Activated T-helper 2 cell treated with anti-CD3 and anti-CD28 coated beads, Interferon-gamma antibody, Interleukin-2, Interleukin-4, amounts not matched to agents 10 μg/mL and 5 μg/mL and 100 μg/mL, durations not matched to agents 14 hours and 24 hours and 36 hours (primary cell): ENCODE measurements at regions of chr15 and their contacts with region 1.

Region 1: DNA sequence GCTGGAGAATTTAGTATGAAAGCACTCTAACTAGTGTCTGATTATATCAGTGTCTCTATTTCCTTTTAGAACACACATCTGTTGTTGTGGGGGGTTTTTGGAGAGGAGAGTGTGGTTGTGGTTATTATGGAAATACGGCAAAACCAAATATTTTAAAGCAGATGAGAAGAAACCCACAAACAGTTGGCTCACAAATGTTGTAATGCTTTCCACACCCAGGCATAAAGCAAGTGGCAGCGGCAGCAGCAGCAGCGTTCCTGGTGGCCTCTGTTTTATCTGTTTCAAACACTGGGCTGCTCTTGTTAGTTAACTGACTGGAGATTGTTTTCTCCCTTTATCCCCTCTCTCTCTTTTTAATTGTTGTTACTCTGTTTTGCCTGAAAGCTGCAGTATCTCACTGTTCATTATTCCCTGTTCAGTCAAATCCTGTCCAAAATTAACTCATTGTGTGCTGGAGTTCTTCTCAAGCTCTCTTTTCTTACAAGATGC is 1045.5 kb upstream of the NR2F2 start:
- DNase-seq: peak; percentile 57
- H3K4me3 Mint-ChIP-seq: peak overlapping the region; percentile 43
- H3K27ac Mint-ChIP-seq: peak overlapping the region; percentile 45
- H3K4me1 Mint-ChIP-seq: peaks cover 61% of the 10 kb centered on the region
- H3K27me3 Mint-ChIP-seq: peaks cover 49% of the 10 kb centered on the region

Region 2: GRCh38 chr15:94582369-94582768 is 702.6 kb before region 1 on chr15:
- intact Hi-C with region 1: loop called (anchors 1 kb)
- DNase-seq: no peak
- H3K4me3 Mint-ChIP-seq: no peak overlapping the region
- H3K27ac Mint-ChIP-seq: no peak overlapping the region
- H3K4me1 Mint-ChIP-seq: peaks cover 31% of the 10 kb centered on the region
- H3K27me3 Mint-ChIP-seq: peaks cover 73% of the 10 kb centered on the region

Region 3: DNA sequence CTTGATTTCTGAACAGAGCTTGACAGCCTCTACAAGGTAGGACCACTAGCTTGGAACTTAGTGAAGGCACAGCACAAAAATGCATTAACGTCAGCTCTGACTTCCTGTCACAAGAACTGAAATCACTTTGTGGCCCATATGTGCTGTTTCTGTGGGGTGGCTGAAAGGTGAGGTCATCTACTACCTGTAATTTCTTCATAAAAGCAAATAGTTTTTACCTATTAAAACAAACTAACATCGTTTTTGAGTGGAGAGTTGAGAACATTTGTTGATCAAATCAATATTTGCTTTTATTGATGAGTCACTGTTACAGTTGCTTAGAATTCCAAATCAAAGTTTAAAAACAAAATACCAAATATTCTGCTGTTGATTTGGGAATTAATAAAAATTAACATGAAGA is 19.5 kb before region 1 on chr15:
- intact Hi-C with region 1: loop called (anchors 2 kb)
- DNase-seq: no peak
- H3K4me3 Mint-ChIP-seq: no peak overlapping the region
- H3K27ac Mint-ChIP-seq: no peak overlapping the region
- H3K4me1 Mint-ChIP-seq: peaks cover 12% of the 10 kb centered on the region
- H3K27me3 Mint-ChIP-seq: peaks cover 60% of the 10 kb centered on the region

Region 4: GRCh38 chr15:95298729-95299128 is 13.8 kb after region 1 on chr15:
- intact Hi-C with region 1: loop called (anchors 1 kb)
- DNase-seq: no peak
- H3K4me3 Mint-ChIP-seq: no peak overlapping the region
- H3K27ac Mint-ChIP-seq: no peak overlapping the region
- H3K4me1 Mint-ChIP-seq: peaks cover 29% of the 10 kb centered on the region
- H3K27me3 Mint-ChIP-seq: peaks cover 39% of the 10 kb centered on the region

Region 5: GRCh38 chr15:95446854-95447253 is 161.9 kb after region 1 on chr15:
- intact Hi-C with region 1: loop called (anchors 5 kb)
- DNase-seq: peak; percentile 33
- H3K4me3 Mint-ChIP-seq: peak overlapping the region; percentile 4
- H3K27ac Mint-ChIP-seq: peak overlapping the region; percentile 64
- H3K4me1 Mint-ChIP-seq: peaks cover 30% of the 10 kb centered on the region
- H3K27me3 Mint-ChIP-seq: no peaks in the 10 kb centered on the region

Region 6: DNA sequence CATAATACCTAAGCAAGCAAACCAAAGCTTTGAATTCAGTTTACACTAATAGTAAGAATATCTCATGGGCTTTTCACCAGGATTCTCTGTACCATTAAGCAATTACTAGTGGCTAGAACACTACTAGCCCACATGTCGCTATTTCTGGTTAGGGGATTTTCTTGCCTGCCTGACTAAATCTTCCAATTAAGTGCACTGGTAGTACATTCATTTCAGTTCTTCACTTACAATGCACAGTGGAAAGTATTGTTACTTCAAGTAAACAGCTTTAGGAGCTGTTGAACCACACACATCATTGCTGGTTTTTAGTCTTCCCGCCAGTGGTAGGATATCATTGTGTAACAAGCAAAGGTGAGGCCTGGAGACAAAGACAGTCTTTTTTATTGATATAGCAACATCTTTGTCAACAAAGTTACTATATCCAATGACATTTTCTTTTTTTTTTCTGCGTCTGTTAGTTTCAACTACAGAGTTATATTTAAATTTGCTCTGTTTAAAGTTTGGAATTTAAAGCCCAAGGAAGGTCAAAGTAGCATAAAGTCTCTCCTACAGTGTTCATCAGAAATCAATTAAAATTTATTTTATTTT is 218.8 kb after region 1 on chr15:
- intact Hi-C with region 1: loop called (anchors 5 kb)
- DNase-seq: no peak
- H3K4me3 Mint-ChIP-seq: no peak overlapping the region
- H3K27ac Mint-ChIP-seq: no peak overlapping the region
- H3K4me1 Mint-ChIP-seq: peaks cover 21% of the 10 kb centered on the region
- H3K27me3 Mint-ChIP-seq: no peaks in the 10 kb centered on the region

Region 7: GRCh38 chr15:95875121-95875688 is 590.2 kb after region 1 on chr15:
- intact Hi-C with region 1: loop called (anchors 10 kb)
- DNase-seq: no peak
- H3K4me3 Mint-ChIP-seq: no peak overlapping the region
- H3K27ac Mint-ChIP-seq: no peak overlapping the region
- H3K4me1 Mint-ChIP-seq: peaks cover 44% of the 10 kb centered on the region
- H3K27me3 Mint-ChIP-seq: peaks cover 4% of the 10 kb centered on the region